ENCODE measurements at regions of chr17 and their contacts with region 1.

Region 1: GRCh38 chr17:20226814-20227482 is 217.8 kb downstream of the SPECC1 start:
- DNase-seq: peak; percentile 60 to 69 (median 67)
- H3K4me3 ChIP-seq: no peak overlapping the region
- H3K4me3 Mint-ChIP-seq: no peak overlapping the region
- H3K27ac ChIP-seq: no peak overlapping the region
- H3K27ac Mint-ChIP-seq: peak overlapping the region in 1 of 7 donors; percentile 23
- H3K4me1 ChIP-seq: no peaks in the 10 kb centered on the region
- H3K4me1 Mint-ChIP-seq: peaks cover 5 to 8% (median 6%) of the 10 kb centered on the region in 4 donors
- H3K27me3 ChIP-seq: no peaks in the 10 kb centered on the region
- H3K27me3 Mint-ChIP-seq: no peaks in the 10 kb centered on the region

Region 2: DNA sequence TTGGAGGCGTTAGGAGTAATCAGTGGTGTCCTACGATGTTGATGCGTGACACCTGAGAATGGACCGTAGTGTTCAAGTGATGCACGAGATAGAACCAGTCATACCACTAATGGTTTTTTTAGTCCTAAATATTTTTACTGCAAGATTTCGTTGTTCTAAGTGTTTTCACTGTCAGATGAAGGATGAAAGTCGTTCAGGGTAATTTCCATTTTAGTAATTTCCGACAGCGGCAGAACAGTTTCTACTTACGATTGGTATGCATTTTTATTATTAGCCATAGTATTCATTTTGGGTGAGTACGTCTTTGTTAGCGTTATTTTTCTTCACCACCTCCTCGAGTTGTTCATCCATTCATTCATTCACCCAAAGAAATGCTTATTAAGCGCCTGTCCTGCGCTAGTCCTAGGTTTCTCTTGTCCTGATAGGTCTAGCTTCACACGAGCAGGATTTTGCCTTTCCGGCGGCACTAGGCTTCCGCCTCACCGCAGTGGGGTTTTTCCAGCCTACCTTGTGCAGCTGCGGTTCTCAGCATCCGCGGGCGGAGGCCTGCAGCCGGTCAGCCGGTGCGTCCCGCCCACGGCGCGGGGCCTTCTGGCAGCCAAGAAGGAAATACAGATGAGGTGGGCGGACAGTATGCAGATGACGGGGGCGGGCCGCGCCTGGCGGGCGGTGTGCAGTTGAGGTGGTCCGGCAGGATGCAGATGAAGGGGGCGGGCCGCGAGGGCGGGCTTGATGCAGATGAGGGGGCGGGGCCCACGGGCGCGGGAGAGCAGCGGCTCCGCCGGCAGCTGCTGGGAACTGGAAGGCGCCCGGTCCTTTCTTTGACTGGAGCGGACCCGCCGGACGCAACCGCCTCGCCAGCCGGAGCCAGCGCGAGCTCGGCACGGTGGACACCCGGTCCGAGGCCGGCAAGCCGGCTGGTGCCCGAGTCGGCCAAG is 71.4 kb before region 1 on chr17:
- CTCF ChIA-PET with region 1: no interaction called
- POLR2A ChIA-PET with region 1: no interaction called
- intact Hi-C with region 1: no loop called
- DNase-seq: peak; percentile 92 to 98 (median 94)
- H3K4me3 ChIP-seq: peak overlapping the region; percentile 37 to 42
- H3K4me3 Mint-ChIP-seq: no peak overlapping the region
- H3K27ac ChIP-seq: peak overlapping the region; percentile 54
- H3K27ac Mint-ChIP-seq: no peak overlapping the region
- H3K4me1 ChIP-seq: peaks cover 19% of the 10 kb centered on the region
- H3K4me1 Mint-ChIP-seq: peaks cover 3 to 8% (median 4%) of the 10 kb centered on the region in 4 donors
- H3K27me3 ChIP-seq: no peaks in the 10 kb centered on the region
- H3K27me3 Mint-ChIP-seq: no peaks in the 10 kb centered on the region

Region 3: GRCh38 chr17:20184977-20185619 is 41.9 kb before region 1 on chr17:
- CTCF ChIA-PET with region 1: no interaction called
- POLR2A ChIA-PET with region 1: no interaction called
- intact Hi-C with region 1: no loop called
- DNase-seq: no peak
- H3K4me3 ChIP-seq: no peak overlapping the region
- H3K4me3 Mint-ChIP-seq: no peak overlapping the region
- H3K27ac ChIP-seq: no peak overlapping the region
- H3K27ac Mint-ChIP-seq: peak overlapping the region in 1 of 7 donors; percentile 35
- H3K4me1 ChIP-seq: no peaks in the 10 kb centered on the region
- H3K4me1 Mint-ChIP-seq: peaks cover 0 to 3% (median 0%) of the 10 kb centered on the region in 4 donors
- H3K27me3 ChIP-seq: no peaks in the 10 kb centered on the region
- H3K27me3 Mint-ChIP-seq: no peaks in the 10 kb centered on the region

Region 4: DNA sequence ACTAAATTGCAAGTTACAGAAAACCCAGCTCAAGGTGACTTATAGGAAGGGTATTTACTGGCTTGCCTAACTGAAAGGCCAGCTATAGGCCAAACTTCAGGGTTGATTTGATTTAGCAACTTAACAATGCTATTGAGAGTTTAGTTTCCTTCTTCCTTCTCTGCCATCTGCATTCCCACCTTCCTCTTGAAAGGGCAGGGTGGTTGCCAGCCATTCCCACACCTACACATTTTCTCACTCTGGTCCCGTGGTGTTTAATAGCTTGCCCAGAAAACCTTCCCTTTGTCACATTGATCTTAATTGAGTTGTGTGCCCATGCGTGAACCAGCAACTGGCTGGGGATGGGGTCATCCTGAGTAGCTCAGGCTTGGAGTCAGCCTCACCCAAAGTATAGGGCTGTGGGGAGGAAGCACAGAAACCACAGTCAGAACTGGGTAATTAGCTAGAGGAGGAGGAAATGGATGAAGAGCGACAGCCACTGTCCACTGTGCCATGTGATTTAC is 23.1 kb before region 1 on chr17:
- CTCF ChIA-PET with region 1: no interaction called
- POLR2A ChIA-PET with region 1: no interaction called
- intact Hi-C with region 1: no loop called
- DNase-seq: no peak
- H3K4me3 ChIP-seq: no peak overlapping the region
- H3K4me3 Mint-ChIP-seq: no peak overlapping the region
- H3K27ac ChIP-seq: no peak overlapping the region
- H3K27ac Mint-ChIP-seq: peak overlapping the region in 1 of 7 donors; percentile 30
- H3K4me1 ChIP-seq: no peaks in the 10 kb centered on the region
- H3K4me1 Mint-ChIP-seq: peaks cover 4 to 17% (median 9%) of the 10 kb centered on the region in 4 donors
- H3K27me3 ChIP-seq: no peaks in the 10 kb centered on the region
- H3K27me3 Mint-ChIP-seq: no peaks in the 10 kb centered on the region

Region 5: DNA sequence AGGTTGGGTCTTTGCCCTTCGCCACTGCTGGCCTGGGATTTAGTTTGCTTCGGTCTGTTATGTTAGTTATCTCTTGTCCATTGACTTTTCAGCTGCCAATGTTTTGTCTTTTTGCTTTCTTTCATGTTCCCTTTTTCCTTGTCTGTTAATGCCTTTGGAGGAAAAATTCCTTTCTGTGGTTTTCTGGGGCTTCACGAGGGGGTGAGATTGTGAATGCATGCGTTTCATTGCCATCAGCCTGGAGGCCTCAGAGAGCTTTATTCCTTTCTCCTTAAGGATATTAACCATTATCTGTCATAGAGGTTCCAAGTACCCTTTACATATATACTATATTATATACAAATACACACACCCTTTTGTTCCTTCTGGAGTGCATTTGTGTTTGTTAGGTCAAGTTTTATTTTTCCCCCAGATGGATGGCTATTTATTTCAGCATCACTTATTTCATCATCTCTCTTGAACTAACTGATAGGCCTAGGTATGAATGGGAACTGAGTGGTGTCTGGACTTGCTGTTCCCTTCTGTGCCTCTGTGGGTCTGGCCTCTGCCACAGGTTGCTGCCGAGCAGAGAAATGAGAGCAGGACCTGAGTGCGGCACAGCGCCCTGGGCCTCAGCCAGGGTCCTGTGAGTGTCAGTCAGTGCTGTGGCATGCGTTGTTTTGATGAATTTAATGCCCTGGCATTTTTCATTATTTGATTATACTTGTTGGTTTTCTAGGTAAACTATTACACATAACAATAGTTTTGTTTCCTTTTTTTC is 47.0 kb after region 1 on chr17:
- CTCF ChIA-PET with region 1: interaction called, 12 read pairs
- POLR2A ChIA-PET with region 1: no interaction called
- intact Hi-C with region 1: loop called (anchors 5 kb)
- DNase-seq: no peak
- H3K4me3 ChIP-seq: no peak overlapping the region
- H3K4me3 Mint-ChIP-seq: peak overlapping the region in 7 of 8 donors; percentile 36 to 84 (median 70)
- H3K27ac ChIP-seq: no peak overlapping the region
- H3K27ac Mint-ChIP-seq: peak overlapping the region; percentile 42 to 90 (median 72)
- H3K4me1 ChIP-seq: peaks cover 85% of the 10 kb centered on the region
- H3K4me1 Mint-ChIP-seq: peaks cover 48 to 80% (median 67%) of the 10 kb centered on the region in 4 donors
- H3K27me3 ChIP-seq: no peaks in the 10 kb centered on the region
- H3K27me3 Mint-ChIP-seq: no peaks in the 10 kb centered on the region

Region 6: DNA sequence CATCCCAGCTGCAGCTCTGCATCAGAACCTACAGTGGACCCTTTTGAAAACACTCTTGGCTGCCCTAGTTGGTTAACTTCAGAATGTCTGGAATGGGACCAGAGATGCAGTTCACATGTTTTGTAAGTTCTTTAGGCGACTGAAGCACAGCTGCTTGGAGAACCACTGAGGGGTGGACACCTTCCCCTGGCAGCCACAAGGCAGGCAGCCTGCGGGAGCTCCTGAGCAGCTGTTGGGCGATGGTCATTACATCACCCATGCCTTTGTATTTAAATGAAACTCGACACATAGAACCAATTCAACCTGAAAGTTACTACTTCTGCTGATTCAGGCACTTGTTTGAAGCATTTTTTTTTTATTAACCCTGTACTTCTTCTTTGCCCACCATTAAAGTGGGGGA is 88.9 kb after region 1 on chr17:
- CTCF ChIA-PET with region 1: interaction called, 35 read pairs
- POLR2A ChIA-PET with region 1: interaction called, 3 read pairs
- intact Hi-C with region 1: loop called (anchors 1 kb)
- DNase-seq: no peak
- H3K4me3 ChIP-seq: no peak overlapping the region
- H3K4me3 Mint-ChIP-seq: no peak overlapping the region
- H3K27ac ChIP-seq: no peak overlapping the region
- H3K27ac Mint-ChIP-seq: no peak overlapping the region
- H3K4me1 ChIP-seq: no peaks in the 10 kb centered on the region
- H3K4me1 Mint-ChIP-seq: peaks cover 0 to under 1% (median 0%) of the 10 kb centered on the region in 4 donors
- H3K27me3 ChIP-seq: no peaks in the 10 kb centered on the region
- H3K27me3 Mint-ChIP-seq: no peaks in the 10 kb centered on the region

Measured in CD4-positive, alpha-beta memory T cell (primary cell).